ENCODE measurements at regions of chr12 and their contacts with region 1.

Region 1: GRCh38 chr12:116277393-116278278 is at the start of gene MED13L:
- DNase-seq: peak; percentile 83
- H3K4me3 ChIP-seq: peak within 1 kb of the TSS; percentile 72 to 91 (median 89)
- H3K27ac ChIP-seq: peak within 1 kb of the TSS; percentile 65
- H3K4me1 ChIP-seq: peaks cover 4% of the 10 kb centered on the region
- H3K27me3 ChIP-seq: no peaks in the 10 kb centered on the region
- CTCF ChIP-seq: peak in 1 of 2 donors; percentile 35
- total RNA-seq, gene MED13L: 85.6 to 140 TPM

Region 2: GRCh38 chr12:116053479-116054200 is 224.0 kb before region 1 on chr12:
- CTCF ChIA-PET with region 1: no interaction called
- dilution Hi-C with region 1: no loop called
- in situ Hi-C with region 1: no loop called
- intact Hi-C with region 1: no loop called
- DNase-seq: peak; percentile 14
- H3K4me3 ChIP-seq: no peak overlapping the region
- H3K27ac ChIP-seq: no peak overlapping the region
- H3K4me1 ChIP-seq: peaks cover 17% of the 10 kb centered on the region
- H3K27me3 ChIP-seq: no peaks in the 10 kb centered on the region
- CTCF ChIP-seq: no peak

Region 3: GRCh38 chr12:116164250-116165035 is 113.2 kb before region 1 on chr12:
- CTCF ChIA-PET with region 1: interaction called, 16 read pairs
- dilution Hi-C with region 1: no loop called
- in situ Hi-C with region 1: no loop called
- intact Hi-C with region 1: no loop called
- DNase-seq: no peak
- H3K4me3 ChIP-seq: peak overlapping the region in 2 of 3 experiments; percentile 5 to 32
- H3K27ac ChIP-seq: peak overlapping the region; percentile 19
- H3K4me1 ChIP-seq: peaks cover 26% of the 10 kb centered on the region
- H3K27me3 ChIP-seq: no peaks in the 10 kb centered on the region
- CTCF ChIP-seq: no peak

Region 4: DNA sequence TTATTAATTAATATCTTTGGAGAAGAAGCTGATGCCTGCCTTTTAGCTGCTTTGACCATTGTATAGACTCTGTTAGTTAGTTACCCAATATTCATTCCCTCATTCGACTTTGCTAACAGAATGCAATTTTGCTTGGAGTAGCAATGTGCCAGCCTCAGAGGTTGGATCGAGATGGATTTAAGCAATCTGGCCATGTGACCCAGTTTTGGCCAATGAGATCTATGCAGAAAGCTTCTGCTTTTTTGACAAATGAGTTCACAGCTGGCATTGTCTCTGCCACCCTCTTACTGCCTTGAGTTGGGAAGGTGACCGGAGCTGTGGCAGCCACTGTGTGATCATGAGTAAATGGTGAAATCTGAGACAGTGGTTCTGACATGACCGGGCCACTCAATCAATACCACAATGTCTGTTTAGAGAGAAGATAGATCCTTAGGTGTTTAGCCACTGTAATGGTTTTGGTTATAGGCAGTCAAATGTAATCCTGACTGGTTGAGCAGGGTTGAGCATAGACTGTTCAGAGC is 74.7 kb after region 1 on chr12:
- CTCF ChIA-PET with region 1: no interaction called
- dilution Hi-C with region 1: loop called (anchors 5 kb)
- in situ Hi-C with region 1: no loop called
- intact Hi-C with region 1: no loop called
- DNase-seq: no peak
- H3K4me3 ChIP-seq: no peak overlapping the region
- H3K27ac ChIP-seq: no peak overlapping the region
- H3K4me1 ChIP-seq: no peaks in the 10 kb centered on the region
- H3K27me3 ChIP-seq: no peaks in the 10 kb centered on the region
- CTCF ChIP-seq: no peak

Region 5: DNA sequence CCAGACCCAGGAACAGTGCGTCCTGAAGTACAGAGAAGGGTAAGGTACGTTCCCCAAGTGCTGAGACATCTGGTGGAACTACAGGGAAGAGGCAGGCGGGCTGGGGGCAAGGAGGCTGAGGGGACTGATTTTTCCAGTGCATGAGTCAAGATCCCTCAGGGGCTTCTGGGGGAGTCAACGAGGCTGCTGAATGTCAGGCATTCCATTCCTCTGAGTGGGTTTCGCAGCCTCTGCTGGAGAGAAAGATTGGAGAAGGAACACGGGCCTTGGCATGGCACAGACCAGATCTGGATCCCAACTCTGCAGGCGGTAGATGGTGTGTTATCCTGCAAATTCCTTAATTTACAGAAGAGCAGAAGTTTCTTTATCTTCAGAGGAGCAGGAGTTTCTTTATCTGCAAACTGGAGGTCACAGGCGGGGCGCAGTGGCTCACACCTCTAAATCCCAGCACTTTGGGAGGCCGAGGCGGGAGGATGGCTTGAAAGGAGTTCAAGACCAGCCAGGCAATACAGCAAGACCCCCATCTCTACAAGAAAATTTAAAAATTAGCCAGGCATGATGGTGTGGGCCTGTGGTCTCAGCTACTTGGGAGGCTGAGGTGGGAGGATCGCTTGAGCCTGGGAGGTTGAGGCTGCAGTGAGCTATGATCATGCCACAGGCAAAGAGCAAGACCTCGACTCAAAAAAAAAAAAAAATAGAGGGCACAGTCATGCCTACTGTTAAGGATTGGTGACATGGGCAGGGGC is 148.9 kb after region 1 on chr12:
- CTCF ChIA-PET with region 1: no interaction called
- dilution Hi-C with region 1: no loop called
- in situ Hi-C with region 1: no loop called
- intact Hi-C with region 1: loop called (anchors 1 kb)
- DNase-seq: peak; percentile 91
- H3K4me3 ChIP-seq: no peak overlapping the region
- H3K27ac ChIP-seq: peak overlapping the region; percentile 21
- H3K4me1 ChIP-seq: peaks cover 20% of the 10 kb centered on the region
- H3K27me3 ChIP-seq: no peaks in the 10 kb centered on the region
- CTCF ChIP-seq: peak; percentile 50 to 70

Measured in mammary epithelial cell (primary cell).